SK-N-SH (cell line): ENCODE measurements at regions of chr20 and their contacts with region 1.

Region 1: DNA sequence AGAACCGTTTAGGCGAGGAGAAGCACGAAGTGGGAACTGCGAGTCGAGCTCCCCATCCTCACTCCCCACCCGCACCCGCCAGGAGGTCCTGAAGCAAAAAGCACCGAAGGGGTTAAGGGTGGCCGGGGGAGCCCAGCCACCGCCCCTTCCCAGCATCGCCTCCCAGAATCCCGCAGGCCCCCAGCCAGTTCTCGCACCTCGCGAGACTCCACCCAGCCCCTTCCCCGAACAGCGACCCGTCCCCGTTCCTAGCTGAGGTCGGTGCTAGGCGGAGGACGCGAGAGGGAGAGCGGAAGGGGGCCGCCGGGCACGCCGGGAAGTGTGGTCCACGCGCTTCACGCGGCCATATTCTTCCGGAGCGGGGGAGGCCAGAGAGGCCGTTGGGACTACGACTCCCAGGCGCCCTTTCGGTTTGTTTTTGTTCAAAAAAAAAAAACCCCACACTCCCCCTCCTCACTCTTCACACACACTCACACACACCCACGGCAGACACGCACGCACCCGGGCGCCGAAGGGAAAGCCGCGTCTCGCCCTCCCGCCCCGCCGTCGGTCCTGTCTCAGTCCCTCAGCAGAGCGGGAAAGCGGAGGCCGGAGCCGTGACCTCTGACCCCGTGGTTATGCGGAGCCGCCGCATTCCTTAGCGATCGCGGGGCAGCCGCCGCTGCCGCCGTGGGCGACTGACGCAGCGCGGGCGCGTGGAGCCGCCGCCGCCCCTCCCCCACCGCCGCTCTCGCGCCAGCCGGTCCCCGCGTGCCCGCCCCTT is at the start of gene ASXL1:
- DNase-seq: peak; percentile 97
- H3K4me3 ChIP-seq: peak within 1 kb of the TSS; percentile 86 to 92
- H3K27ac ChIP-seq: peak within 1 kb of the TSS; percentile 95
- H3K4me1 ChIP-seq: peaks cover 13 to 26% of the 10 kb centered on the region in 2 experiments; a peak in 3 of 4 replicates
- H3K27me3 ChIP-seq: no peaks in the 10 kb centered on the region
- CTCF ChIP-seq: no peak
- EP300 ChIP-seq: no peak
- RAD21 ChIP-seq: no peak
- polyA plus RNA-seq, gene ASXL1: 36.6 and 44.7 TPM in 2 replicates

Region 2: DNA sequence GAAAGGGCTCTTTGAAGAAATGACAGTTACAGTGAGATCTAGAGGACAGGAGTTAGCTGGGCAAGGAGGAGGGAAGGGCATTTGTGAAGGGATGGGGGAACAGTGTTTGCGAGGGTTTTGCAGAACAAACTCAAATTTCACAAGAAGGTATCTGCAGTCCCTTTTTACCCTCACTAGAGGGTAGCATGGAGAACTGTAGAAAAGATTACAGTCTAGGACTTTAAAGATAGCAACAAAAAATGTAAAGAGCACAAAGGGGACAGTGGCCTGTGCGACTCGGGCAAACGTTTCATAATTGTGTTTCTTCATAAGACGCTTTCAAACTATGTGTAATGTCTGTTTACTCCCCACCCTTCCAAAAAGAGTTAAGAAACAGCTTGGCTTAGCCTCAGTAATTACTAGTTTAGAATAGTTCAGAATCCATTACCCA is 21.1 kb before region 1 on chr20:
- CTCF ChIA-PET with region 1: interaction called, 13 read pairs
- POLR2A ChIA-PET with region 1: no interaction called
- DNase-seq: peak; percentile 47
- H3K4me3 ChIP-seq: no peak overlapping the region; a peak in 1 of 4 replicates
- H3K27ac ChIP-seq: no peak overlapping the region
- H3K4me1 ChIP-seq: peaks cover 2 to 11% of the 10 kb centered on the region in 2 experiments; a peak in 2 of 4 replicates
- H3K27me3 ChIP-seq: no peaks in the 10 kb centered on the region
- CTCF ChIP-seq: peak; percentile 63
- EP300 ChIP-seq: no peak
- RAD21 ChIP-seq: peak; percentile 69